Breast epithelium (tissue), 4 donors: ENCODE measurements at regions of chr12 and their contacts with region 1.

Region 1: DNA sequence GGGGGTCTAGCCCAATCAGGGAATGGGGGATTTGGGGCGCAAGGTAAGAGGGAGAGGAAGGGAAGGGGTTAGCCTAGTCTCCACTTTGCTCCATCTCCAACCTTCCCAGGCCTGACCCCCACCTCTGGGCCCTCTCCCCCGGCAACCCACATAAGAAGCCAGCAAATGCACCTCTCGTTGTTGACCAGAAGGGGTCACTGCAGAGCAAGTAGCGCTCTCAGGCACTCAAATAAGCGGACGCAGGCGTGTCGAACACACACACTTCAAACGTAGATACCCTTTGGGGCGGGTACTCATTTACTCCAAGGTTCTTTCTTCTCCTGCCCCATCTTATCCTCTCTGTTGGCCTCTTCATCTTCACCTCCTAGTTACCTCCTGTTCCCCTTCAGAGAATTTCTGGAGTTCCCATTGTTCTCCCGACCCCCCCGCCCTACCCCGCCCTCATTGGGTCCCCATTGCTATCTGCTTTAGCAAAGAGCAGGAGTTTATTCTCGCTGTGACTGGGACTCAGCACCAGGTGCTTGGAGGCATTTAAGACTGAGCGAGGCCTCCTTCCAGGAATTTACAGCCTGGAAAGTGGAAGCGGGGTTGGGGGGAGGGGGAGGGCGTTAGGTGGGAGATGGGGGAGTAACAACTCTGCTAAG is 1.5 kb upstream of the SRRM4 start:
- DNase-seq: no peak
- H3K4me3 ChIP-seq: no peak overlapping the region
- H3K27ac ChIP-seq: no peak overlapping the region
- H3K4me1 ChIP-seq: no peaks in the 10 kb centered on the region
- H3K27me3 ChIP-seq: peaks cover 0 to 71% of the 10 kb centered on the region in 2 donors
- CTCF ChIP-seq: peak in 1 of 3 donors; percentile 36
- POLR2A ChIP-seq: no peak

Region 2: DNA sequence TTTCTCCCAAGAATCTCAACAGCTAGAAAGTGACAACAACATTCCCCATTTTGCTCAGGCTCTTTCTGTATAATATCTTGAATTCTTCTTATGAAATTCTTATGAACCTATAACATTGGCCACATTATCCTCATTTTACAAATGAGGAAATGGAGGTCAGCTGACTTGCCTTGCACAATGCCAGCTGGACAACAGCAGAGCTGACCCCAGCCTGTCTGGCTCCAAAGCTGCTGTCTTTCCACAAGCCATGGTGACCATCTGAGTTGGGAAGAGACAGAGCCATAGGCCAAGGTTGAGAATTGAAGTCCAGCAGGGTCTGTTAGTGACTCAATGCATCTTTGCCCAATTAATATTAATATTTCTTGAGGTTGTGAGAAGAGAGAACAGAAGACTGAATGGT is 1098.4 kb before region 1 on chr12:
- intact Hi-C with region 1: loop called (anchors 5 kb)
- DNase-seq: no peak
- H3K4me3 ChIP-seq: no peak overlapping the region
- H3K27ac ChIP-seq: no peak overlapping the region
- H3K4me1 ChIP-seq: no peaks in the 10 kb centered on the region
- H3K27me3 ChIP-seq: peaks cover 0 to 4% of the 10 kb centered on the region in 2 donors
- CTCF ChIP-seq: no peak
- POLR2A ChIP-seq: no peak

Region 3: DNA sequence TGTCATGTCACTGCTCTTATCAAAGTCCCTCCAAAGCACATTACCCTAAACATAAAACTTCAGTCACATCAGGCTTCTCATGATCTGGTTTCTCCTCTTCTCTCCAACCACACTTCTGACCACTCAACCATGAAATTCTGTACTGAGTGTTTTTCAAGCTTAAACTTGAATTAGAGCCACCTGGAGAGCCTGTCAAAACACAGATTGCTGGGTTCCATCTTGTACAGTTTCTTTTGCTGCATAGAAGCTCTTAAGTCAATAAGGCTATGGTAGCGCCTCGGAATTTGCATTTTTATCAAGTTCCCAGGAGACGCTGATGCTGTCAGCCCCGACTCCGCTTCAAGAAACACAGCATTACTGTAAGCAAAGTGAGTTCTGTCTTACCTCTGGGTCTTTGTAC is 14.9 kb before region 1 on chr12:
- intact Hi-C with region 1: loop called (anchors 1 kb)
- DNase-seq: no peak
- H3K4me3 ChIP-seq: no peak overlapping the region
- H3K27ac ChIP-seq: no peak overlapping the region
- H3K4me1 ChIP-seq: no peaks in the 10 kb centered on the region
- H3K27me3 ChIP-seq: peaks cover 0 to 11% of the 10 kb centered on the region in 2 donors
- CTCF ChIP-seq: no peak
- POLR2A ChIP-seq: no peak

Region 4: GRCh38 chr12:119008691-119009221 is 28.9 kb after region 1 on chr12:
- intact Hi-C with region 1: no loop called
- DNase-seq: no peak
- H3K4me3 ChIP-seq: no peak overlapping the region
- H3K27ac ChIP-seq: no peak overlapping the region
- H3K4me1 ChIP-seq: no peaks in the 10 kb centered on the region
- H3K27me3 ChIP-seq: peaks cover 0 to 19% of the 10 kb centered on the region in 2 donors
- CTCF ChIP-seq: no peak
- POLR2A ChIP-seq: no peak